ENCODE measurements at regions of chr3 and their contacts with region 1.

Region 1: DNA sequence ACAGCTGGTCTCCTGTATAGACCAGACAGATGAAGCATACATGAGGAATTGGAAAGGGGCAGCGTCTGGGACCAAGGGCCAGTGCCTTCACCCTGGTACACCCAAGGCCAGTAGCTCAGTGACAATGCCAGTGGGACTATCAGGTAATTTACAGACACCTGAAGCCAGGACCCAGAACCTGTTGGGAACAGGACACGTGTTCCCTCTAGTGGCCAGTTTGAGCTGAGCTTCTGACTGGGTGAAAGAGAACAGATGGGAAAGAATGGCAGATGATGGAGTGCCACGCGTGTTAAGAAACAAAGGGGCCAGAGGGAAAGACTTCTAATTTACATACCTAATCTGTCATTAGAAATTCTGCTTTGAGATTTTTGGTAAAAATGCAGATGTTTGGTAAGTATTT is 5.1 kb upstream of the SLC25A38 start:
- DNase-seq: peak; percentile 78
- H3K4me3 Mint-ChIP-seq: no peak overlapping the region
- H3K27ac Mint-ChIP-seq: no peak overlapping the region
- H3K4me1 Mint-ChIP-seq: peaks cover 4% of the 10 kb centered on the region
- H3K27me3 Mint-ChIP-seq: no peaks in the 10 kb centered on the region

Region 2: DNA sequence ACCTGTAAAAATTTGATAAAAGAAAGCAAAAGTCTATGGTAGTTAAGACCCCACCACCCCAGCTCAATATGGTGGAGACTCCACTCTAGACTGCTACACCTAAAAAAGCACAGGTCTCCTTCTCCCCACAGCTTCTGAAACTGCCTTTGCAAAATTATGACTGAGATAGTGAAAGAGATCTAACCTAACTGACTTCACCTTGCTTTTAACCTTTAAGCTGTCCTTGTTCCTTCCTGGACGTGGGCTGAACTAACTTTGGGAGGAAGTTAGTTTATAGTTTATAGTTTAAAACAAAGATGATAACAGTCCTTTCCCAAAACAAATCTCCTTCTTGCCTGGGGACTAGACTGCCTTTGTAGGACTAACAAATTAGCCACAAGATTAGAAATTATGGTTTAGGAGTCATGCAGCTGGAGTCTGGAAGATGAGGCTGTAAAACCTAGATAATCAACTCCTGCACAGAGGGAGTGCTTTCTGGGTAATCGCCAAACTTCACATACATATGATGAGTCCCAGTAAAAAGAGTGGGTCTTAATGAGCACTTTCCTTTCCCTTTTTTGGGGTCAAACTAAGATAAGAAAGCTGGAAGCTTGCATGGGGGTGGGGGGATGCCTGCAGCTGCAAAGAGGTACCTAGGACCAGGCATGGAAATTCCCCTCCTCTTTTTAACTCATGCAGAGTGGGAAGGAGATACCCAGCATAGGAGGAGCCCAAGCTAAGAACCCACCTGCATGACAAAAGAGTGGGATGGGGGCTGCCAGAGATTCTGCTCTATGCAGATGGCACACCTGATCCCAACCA is 31.1 kb before region 1 on chr3:
- CTCF ChIA-PET with region 1: interaction called, 16 read pairs
- intact Hi-C with region 1: no loop called
- DNase-seq: peak; percentile 20
- H3K4me3 Mint-ChIP-seq: no peak overlapping the region
- H3K27ac Mint-ChIP-seq: peak overlapping the region; percentile 37
- H3K4me1 Mint-ChIP-seq: peaks cover 43% of the 10 kb centered on the region
- H3K27me3 Mint-ChIP-seq: no peaks in the 10 kb centered on the region

Region 3: GRCh38 chr3:39361252-39361927 is 16.7 kb before region 1 on chr3:
- CTCF ChIA-PET with region 1: interaction called, 6 read pairs
- intact Hi-C with region 1: loop called (anchors 2 kb)
- DNase-seq: peak; percentile 64
- H3K4me3 Mint-ChIP-seq: no peak overlapping the region
- H3K27ac Mint-ChIP-seq: peak overlapping the region; percentile 46
- H3K4me1 Mint-ChIP-seq: peaks cover 28% of the 10 kb centered on the region
- H3K27me3 Mint-ChIP-seq: no peaks in the 10 kb centered on the region

Region 4: DNA sequence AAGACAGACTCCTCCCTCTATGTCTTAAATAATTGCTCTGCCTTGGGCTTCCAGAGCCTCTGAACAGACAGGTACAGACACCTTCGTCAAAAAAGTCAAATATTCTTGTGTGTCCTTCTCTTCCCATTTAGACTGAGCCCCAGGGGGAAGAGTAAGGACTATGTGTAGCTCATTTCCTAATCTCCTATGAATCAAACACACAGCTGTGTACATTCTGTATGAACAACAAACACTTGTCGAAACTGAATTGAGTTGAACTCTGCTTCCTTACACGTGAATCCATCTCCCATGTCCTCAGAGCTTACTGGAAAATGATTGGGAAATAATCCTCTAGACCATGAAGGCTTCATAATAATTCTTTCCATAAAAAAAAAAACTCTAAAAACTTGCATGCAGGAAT is 170.2 kb after region 1 on chr3:
- CTCF ChIA-PET with region 1: no interaction called
- intact Hi-C with region 1: no loop called
- DNase-seq: no peak
- H3K4me3 Mint-ChIP-seq: no peak overlapping the region
- H3K27ac Mint-ChIP-seq: no peak overlapping the region
- H3K4me1 Mint-ChIP-seq: no peaks in the 10 kb centered on the region
- H3K27me3 Mint-ChIP-seq: peaks cover 10% of the 10 kb centered on the region

Region 5: GRCh38 chr3:40079203-40079846 is 701.2 kb after region 1 on chr3:
- CTCF ChIA-PET with region 1: no interaction called
- intact Hi-C with region 1: no loop called
- DNase-seq: no peak
- H3K4me3 Mint-ChIP-seq: no peak overlapping the region
- H3K27ac Mint-ChIP-seq: no peak overlapping the region
- H3K4me1 Mint-ChIP-seq: no peaks in the 10 kb centered on the region
- H3K27me3 Mint-ChIP-seq: peaks cover 7% of the 10 kb centered on the region